ENCODE measurements at regions of chr2 and their contacts with region 1.

Region 1: GRCh38 chr2:165203689-165204559 is at the start of gene SCN3A:
- DNase-seq: peak; percentile 18
- H3K4me3 Mint-ChIP-seq: peak within 1 kb of the TSS; percentile 11
- H3K27ac Mint-ChIP-seq: no peak within 1 kb of the TSS
- H3K4me1 Mint-ChIP-seq: peaks cover 3% of the 10 kb centered on the region
- H3K27me3 Mint-ChIP-seq: peaks cover 9% of the 10 kb centered on the region
- total RNA-seq, gene SCN3A: 0.10 to 0.12 TPM

Region 2: DNA sequence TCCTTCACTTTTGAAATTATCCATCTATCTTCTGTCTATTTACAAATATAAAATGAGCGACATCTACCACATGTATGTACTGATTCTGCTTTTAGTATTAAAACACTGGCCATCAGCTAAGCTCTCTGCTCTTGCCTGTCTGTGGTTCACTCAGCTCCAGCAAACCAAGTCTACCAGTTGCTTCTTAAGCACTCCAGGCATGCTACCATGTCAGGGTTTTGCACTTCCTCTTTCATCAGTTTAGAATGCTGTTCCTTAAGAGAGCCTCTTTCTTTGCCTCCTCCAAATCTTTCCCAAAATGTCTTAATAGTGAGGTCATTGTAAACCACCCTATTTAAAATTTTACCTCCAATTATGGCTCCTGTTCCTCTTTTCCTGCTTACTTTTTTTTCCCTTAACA is 59.6 kb before region 1 on chr2:
- CTCF ChIA-PET with region 1: no interaction called
- intact Hi-C with region 1: loop called (anchors 5 kb)
- DNase-seq: no peak
- H3K4me3 Mint-ChIP-seq: no peak overlapping the region
- H3K27ac Mint-ChIP-seq: no peak overlapping the region
- H3K4me1 Mint-ChIP-seq: no peaks in the 10 kb centered on the region
- H3K27me3 Mint-ChIP-seq: no peaks in the 10 kb centered on the region

Region 3: DNA sequence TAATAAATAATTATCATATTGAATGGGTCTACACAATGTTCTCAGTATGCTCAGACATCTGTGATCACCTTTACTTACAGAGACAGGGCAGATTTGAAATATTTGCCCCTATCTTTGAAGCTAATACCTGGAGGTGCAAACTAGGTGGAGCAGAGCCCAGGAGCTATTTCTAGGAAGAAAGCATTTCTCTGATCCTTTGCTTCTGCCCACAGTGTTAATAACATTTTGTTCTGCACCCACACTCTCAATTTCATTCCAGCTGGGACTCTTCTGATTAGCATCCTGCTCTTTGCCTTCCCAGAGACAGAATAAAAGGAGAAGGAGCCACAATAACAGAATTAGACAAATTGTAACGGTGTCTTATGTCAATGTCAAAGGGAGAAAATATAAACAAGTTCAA is 23.6 kb after region 1 on chr2:
- CTCF ChIA-PET with region 1: no interaction called
- intact Hi-C with region 1: no loop called
- DNase-seq: no peak
- H3K4me3 Mint-ChIP-seq: no peak overlapping the region
- H3K27ac Mint-ChIP-seq: no peak overlapping the region
- H3K4me1 Mint-ChIP-seq: no peaks in the 10 kb centered on the region
- H3K27me3 Mint-ChIP-seq: peaks cover 2% of the 10 kb centered on the region

Region 4: GRCh38 chr2:165274698-165275097 is 70.8 kb after region 1 on chr2:
- CTCF ChIA-PET with region 1: no interaction called
- intact Hi-C with region 1: no loop called
- DNase-seq: no peak
- H3K4me3 Mint-ChIP-seq: no peak overlapping the region
- H3K27ac Mint-ChIP-seq: no peak overlapping the region
- H3K4me1 Mint-ChIP-seq: peaks cover 15% of the 10 kb centered on the region
- H3K27me3 Mint-ChIP-seq: peaks cover 5% of the 10 kb centered on the region

Region 5: GRCh38 chr2:165469417-165469816 is 265.5 kb after region 1 on chr2 and contains the start of gene CSRNP3:
- CTCF ChIA-PET with region 1: no interaction called
- intact Hi-C with region 1: no loop called
- DNase-seq: no peak
- H3K4me3 Mint-ChIP-seq: no peak within 1 kb of the TSS
- H3K27ac Mint-ChIP-seq: no peak within 1 kb of the TSS
- H3K4me1 Mint-ChIP-seq: no peaks in the 10 kb centered on the region
- H3K27me3 Mint-ChIP-seq: peaks cover 12% of the 10 kb centered on the region
- total RNA-seq, gene CSRNP3: not detected

Measured in activated naive CD4-positive, alpha-beta T cell treated with anti-CD3 and anti-CD28 coated beads for 36 hours (primary cell).